ENCODE measurements at regions of chr6 and their contacts with region 1.

Region 1: DNA sequence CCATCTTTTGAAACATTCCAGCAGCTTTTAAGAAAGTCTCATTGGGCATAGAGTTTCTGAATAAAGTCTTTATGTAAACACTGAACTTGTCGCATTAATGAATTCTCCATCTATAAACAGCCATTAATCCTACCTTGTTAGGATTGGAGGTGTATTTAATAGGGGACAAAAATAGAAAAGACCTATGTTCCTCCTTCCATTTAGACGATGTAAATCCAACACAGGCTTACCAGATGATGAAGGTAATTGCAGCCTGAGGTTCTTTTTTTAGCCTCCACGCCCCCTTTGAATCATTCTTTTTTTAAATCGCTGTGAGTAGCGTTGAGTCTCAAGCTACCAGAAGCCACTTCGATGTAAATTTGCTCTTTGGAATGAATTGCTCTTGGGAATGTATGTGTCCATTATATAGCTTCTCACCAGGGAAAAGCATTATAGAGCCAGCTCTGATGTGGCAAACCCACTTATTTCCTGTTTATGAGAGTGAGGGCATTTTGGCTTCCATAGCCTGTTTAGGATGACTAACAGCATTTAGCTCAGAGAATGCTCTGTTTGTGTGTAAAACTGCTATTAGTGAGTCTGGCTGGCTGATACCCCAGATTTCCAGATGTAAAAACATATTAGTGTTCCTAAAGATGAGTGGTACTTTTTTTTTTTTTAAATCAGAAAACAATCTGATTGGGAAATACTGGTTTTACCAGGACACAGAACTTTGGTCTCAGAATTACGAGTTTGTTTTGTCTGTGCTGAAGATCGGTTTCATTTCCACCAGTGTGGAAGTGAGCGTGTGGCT is 74.9 kb upstream of the CLDN20 start:
- DNase-seq: peak; percentile 99
- H3K4me3 ChIP-seq: peak overlapping the region in 1 of 3 experiments; percentile 37
- H3K27ac ChIP-seq: peak overlapping the region; percentile 90
- H3K4me1 ChIP-seq: peaks cover 51% of the 10 kb centered on the region
- H3K27me3 ChIP-seq: no peaks in the 10 kb centered on the region
- CTCF ChIP-seq: no peak
- POLR2A ChIP-seq: peak; percentile 50

Region 2: GRCh38 chr6:154733012-154733625 is 455.8 kb before region 1 on chr6 and contains the start of gene SCAF8:
- CTCF ChIA-PET with region 1: no interaction called
- POLR2A ChIA-PET with region 1: interaction called, 4 read pairs
- dilution Hi-C with region 1: no loop called
- intact Hi-C with region 1: loop called (anchors 5 kb)
- DNase-seq: peak; percentile 81
- H3K4me3 ChIP-seq: peak within 1 kb of the TSS; percentile 74 to 96 (median 89)
- H3K27ac ChIP-seq: peak within 1 kb of the TSS; percentile 90
- H3K4me1 ChIP-seq: peaks cover 20% of the 10 kb centered on the region
- H3K27me3 ChIP-seq: no peaks in the 10 kb centered on the region
- CTCF ChIP-seq: peak; percentile 83 to 85
- POLR2A ChIP-seq: peak; percentile 84
- total RNA-seq, gene SCAF8: 37.4 and 37.8 TPM in 2 replicates

Region 3: GRCh38 chr6:155201461-155202226 is 12.7 kb after region 1 on chr6:
- CTCF ChIA-PET with region 1: interaction called, 3 read pairs
- POLR2A ChIA-PET with region 1: interaction called, 11 read pairs
- dilution Hi-C with region 1: no loop called
- intact Hi-C with region 1: loop called (anchors 1 kb)
- DNase-seq: peak; percentile 96
- H3K4me3 ChIP-seq: no peak overlapping the region
- H3K27ac ChIP-seq: peak overlapping the region; percentile 96
- H3K4me1 ChIP-seq: peaks cover 24% of the 10 kb centered on the region
- H3K27me3 ChIP-seq: no peaks in the 10 kb centered on the region
- CTCF ChIP-seq: no peak
- POLR2A ChIP-seq: no peak

Region 4: GRCh38 chr6:155223646-155224451 is 34.9 kb after region 1 on chr6:
- CTCF ChIA-PET with region 1: no interaction called
- POLR2A ChIA-PET with region 1: no interaction called
- dilution Hi-C with region 1: no loop called
- intact Hi-C with region 1: loop called (anchors 1 kb)
- DNase-seq: peak; percentile 90
- H3K4me3 ChIP-seq: no peak overlapping the region
- H3K27ac ChIP-seq: peak overlapping the region; percentile 74
- H3K4me1 ChIP-seq: peaks cover 15% of the 10 kb centered on the region
- H3K27me3 ChIP-seq: no peaks in the 10 kb centered on the region
- CTCF ChIP-seq: no peak
- POLR2A ChIP-seq: no peak

Region 5: GRCh38 chr6:155273431-155273830 is 84.5 kb after region 1 on chr6:
- CTCF ChIA-PET with region 1: interaction called, 4 read pairs
- POLR2A ChIA-PET with region 1: no interaction called
- dilution Hi-C with region 1: no loop called
- intact Hi-C with region 1: loop called (anchors 1 kb)
- DNase-seq: peak; percentile 88
- H3K4me3 ChIP-seq: no peak overlapping the region
- H3K27ac ChIP-seq: peak overlapping the region; percentile 97
- H3K4me1 ChIP-seq: peaks cover 41% of the 10 kb centered on the region
- H3K27me3 ChIP-seq: no peaks in the 10 kb centered on the region
- CTCF ChIP-seq: no peak
- POLR2A ChIP-seq: no peak

Region 6: DNA sequence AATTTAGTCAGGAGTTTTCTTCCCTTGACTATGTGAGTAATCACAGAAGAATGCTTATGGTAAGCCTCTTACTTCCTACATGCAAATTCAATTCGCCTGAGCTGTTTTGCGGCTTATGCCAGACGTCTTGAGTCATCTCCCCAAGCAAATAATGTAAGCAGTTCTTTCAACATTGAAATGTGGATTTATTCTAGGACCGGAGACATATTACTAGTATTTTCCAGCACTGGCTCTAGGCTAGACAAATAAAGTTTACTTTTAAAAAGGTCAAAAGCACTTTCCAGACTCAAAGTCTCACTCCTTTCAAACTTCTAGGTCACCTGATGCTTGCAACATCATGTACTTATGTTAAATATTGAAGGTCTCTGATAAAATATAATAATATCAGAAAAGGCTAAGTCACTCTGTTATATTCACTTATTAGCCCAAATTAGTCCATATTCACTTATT is 304.8 kb after region 1 on chr6:
- CTCF ChIA-PET with region 1: no interaction called
- POLR2A ChIA-PET with region 1: no interaction called
- dilution Hi-C with region 1: no loop called
- intact Hi-C with region 1: loop called (anchors 10 kb)
- DNase-seq: peak; percentile 96
- H3K4me3 ChIP-seq: peak overlapping the region in 1 of 3 experiments; percentile 6
- H3K27ac ChIP-seq: peak overlapping the region; percentile 96
- H3K4me1 ChIP-seq: peaks cover 26% of the 10 kb centered on the region
- H3K27me3 ChIP-seq: no peaks in the 10 kb centered on the region
- CTCF ChIP-seq: no peak
- POLR2A ChIP-seq: peak; percentile 64

Measured in endothelial cell of umbilical vein (primary cell).